Vagina (tissue), 2 donors: ENCODE measurements at regions of chr15 and their contacts with region 1.

Region 1: DNA sequence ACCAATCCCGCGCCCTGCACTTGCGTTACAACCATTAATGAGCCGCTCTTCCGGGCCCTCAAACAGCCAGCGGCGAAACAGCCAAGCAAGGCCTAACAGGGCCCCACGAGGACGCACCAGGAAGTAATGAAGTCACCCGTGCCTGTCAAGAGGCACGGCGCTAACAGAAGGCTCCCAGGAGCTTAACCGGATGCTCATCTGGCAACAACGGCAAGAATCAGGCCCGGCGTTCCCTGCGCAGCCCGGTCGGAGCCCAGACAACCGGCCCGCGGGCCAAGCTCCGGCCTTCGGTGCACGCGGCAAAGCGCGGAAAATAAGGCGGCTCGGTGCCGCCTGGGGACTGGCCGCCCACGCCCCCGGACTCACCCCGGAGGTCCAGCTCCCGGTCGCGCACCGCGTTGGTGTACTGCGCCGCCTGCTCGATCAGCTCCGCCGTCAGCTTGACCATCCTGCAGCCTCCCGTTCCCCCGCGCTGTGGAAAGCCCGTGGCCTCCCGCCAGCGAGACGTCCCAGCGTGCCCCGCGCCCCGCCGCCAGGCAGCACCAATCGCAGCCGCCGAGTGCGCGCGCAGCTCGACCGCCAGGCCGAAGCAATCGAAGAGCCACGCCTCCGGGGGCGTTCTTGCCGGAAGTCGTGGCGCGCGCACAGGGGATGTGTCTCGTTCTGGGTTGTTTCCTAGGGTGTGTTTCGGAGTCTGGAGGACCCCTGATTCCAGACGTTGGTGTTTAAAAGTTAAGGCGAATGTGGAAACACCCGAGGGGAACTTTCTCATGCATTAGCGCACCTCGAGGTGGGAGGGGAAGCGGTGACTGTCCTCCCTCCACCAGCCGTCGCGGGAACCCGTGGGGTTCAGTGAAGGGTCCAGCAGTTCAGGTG is at the start of gene SNRPA1:
- DNase-seq: peak in 1 of 2 donors; percentile 96
- H3K4me3 ChIP-seq: peak within 1 kb of the TSS; percentile 77 to 92
- H3K27ac ChIP-seq: peak within 1 kb of the TSS; percentile 89
- H3K4me1 ChIP-seq: peaks cover 37% of the 10 kb centered on the region
- H3K27me3 ChIP-seq: no peaks in the 10 kb centered on the region
- CTCF ChIP-seq: no peak
- POLR2A ChIP-seq: peak in 1 of 2 donors; percentile 78
- total RNA-seq, gene SNRPA1: 30.7 TPM

Region 2: DNA sequence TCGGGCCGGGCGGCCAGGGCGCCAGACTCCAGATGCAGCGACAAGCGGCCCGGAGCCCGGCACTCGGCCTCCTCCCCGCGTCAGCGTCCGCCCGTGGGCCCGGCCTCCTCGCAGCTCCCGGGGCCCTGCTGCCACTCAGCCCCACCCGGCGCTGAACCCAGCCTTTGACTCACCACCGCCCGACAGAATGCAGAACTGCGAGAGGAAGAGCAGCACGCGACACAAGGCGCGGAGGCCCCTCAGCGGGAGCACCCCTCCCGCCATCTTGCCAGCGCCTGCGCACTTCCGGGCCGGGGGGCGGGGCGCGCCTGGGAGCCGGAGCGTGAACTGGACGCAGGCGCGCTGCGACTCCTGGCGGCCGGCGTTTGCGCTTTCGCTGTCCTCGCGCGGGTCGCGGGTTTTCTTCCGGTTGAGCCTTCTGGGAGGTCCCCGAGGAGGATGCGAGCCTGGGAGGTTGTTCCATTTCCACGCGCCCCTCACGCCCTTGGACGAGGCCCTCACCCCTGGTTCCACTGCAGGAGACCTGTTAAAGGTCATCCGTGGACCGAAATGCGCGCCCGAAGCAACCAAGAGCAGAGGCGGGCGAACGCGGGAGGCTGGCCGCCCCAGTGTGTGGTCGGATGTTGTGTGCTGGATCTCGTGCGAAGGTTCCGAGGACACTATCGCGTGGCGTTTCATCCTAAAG is 357.3 kb after region 1 on chr15 and contains the start of gene TM2D3:
- intact Hi-C with region 1: loop called (anchors 5 kb)
- DNase-seq: peak; percentile 93 to 96
- H3K4me3 ChIP-seq: peak within 1 kb of the TSS; percentile 73 to 99
- H3K27ac ChIP-seq: peak within 1 kb of the TSS; percentile 92
- H3K4me1 ChIP-seq: peaks cover 30% of the 10 kb centered on the region
- H3K27me3 ChIP-seq: no peaks in the 10 kb centered on the region
- CTCF ChIP-seq: peak; percentile 57 to 90 (median 70)
- POLR2A ChIP-seq: peak in 1 of 2 donors; percentile 93
- total RNA-seq, gene TM2D3: 39.0 TPM